Activated T-helper 1 cell treated with anti-CD3 and anti-CD28 coated beads, Interleukin-12 subunit alpha, Interleukin-12 subunit beta, Interleukin-2, Interleukin-4 antibody, amounts not matched to agents 30 ng/mL and 10 ng/mL and 1 ng/mL, durations not matched to agents 14 hours and 24 hours and 36 hours (primary cell): ENCODE measurements at regions of chr3 and their contacts with region 1.

Region 1: DNA sequence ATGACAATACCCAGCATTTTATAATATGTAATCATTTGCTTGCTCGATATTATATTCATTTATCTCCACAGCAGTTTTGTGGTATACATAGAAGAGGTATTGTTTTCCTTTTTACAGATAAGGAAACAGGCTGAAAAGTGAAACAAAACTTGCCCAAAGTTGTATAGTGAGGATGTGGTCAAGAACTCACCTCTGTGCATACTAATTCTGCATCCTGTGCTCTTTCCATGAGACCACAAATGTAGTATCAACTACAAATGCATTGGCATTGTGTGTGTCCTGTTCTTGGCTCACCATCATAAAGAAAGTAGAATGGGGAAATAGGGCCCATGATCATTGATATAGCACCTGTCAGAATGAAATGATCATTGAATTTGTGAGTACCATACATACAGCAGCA is 167.3 kb downstream of the NECTIN3 start:
- DNase-seq: peak; percentile 48
- H3K4me3 Mint-ChIP-seq: peak overlapping the region; percentile 69
- H3K27ac Mint-ChIP-seq: peak overlapping the region; percentile 76
- H3K4me1 Mint-ChIP-seq: peaks cover 49% of the 10 kb centered on the region
- H3K27me3 Mint-ChIP-seq: no peaks in the 10 kb centered on the region

Region 2: DNA sequence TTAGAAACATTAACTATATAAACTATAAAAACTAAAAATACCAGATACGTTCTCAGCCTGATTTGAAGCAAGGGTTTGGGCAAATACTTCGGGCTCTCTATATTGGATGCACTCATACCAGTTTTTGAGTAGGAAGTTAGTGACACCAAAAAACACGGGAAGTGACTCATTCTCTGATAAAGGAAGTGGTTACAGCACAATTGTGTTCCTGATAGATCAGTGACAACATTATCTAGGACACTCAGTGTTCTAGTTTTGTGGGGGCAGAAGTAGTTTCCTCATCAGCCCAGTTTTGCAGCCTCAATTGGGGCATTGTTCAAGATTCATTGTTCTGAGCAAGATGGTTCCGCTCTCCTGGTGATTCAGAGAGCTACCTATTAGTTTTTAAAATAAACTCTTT is 1432.0 kb before region 1 on chr3:
- intact Hi-C with region 1: loop called (anchors 2 kb)
- DNase-seq: peak; percentile 30
- H3K4me3 Mint-ChIP-seq: peak overlapping the region; percentile 35
- H3K27ac Mint-ChIP-seq: peak overlapping the region; percentile 67
- H3K4me1 Mint-ChIP-seq: peaks cover 39% of the 10 kb centered on the region
- H3K27me3 Mint-ChIP-seq: peaks cover 8% of the 10 kb centered on the region

Region 3: GRCh38 chr3:110814170-110815007 is 424.5 kb before region 1 on chr3:
- intact Hi-C with region 1: loop called (anchors 2 kb)
- DNase-seq: peak; percentile 9
- H3K4me3 Mint-ChIP-seq: peak overlapping the region; percentile 37
- H3K27ac Mint-ChIP-seq: peak overlapping the region; percentile 70
- H3K4me1 Mint-ChIP-seq: peaks cover 22% of the 10 kb centered on the region
- H3K27me3 Mint-ChIP-seq: peaks cover 11% of the 10 kb centered on the region

Region 4: GRCh38 chr3:111227216-111227615 is 11.7 kb before region 1 on chr3:
- intact Hi-C with region 1: no loop called
- DNase-seq: no peak
- H3K4me3 Mint-ChIP-seq: no peak overlapping the region
- H3K27ac Mint-ChIP-seq: no peak overlapping the region
- H3K4me1 Mint-ChIP-seq: peaks cover 14% of the 10 kb centered on the region
- H3K27me3 Mint-ChIP-seq: peaks cover 4% of the 10 kb centered on the region